Spleen (tissue), 13 donors: ENCODE measurements at regions of chr16 and their contacts with region 1.

Region 1: GRCh38 chr16:67672739-67673662 is 6.4 kb downstream of the C16orf86 start:
- DNase-seq: peak; percentile 91
- H3K4me3 ChIP-seq: peak overlapping the region in 1 of 8 donors; percentile 27
- H3K27ac ChIP-seq: peak overlapping the region; percentile 31 to 94 (median 82)
- H3K4me1 ChIP-seq: peaks cover 25 to 95% (median 78%) of the 10 kb centered on the region in 6 donors
- H3K27me3 ChIP-seq: no peaks in the 10 kb centered on the region
- CTCF ChIP-seq: peak; percentile 58 to 90 (median 80)
- POLR2A ChIP-seq: no peak

Region 2: GRCh38 chr16:67561824-67562525 is 111.0 kb before region 1 on chr16:
- intact Hi-C with region 1: no loop called
- DNase-seq: peak; percentile 100
- H3K4me3 ChIP-seq: peak overlapping the region; percentile 42 to 95 (median 86)
- H3K27ac ChIP-seq: peak overlapping the region; percentile 94 to 100 (median 100)
- H3K4me1 ChIP-seq: peaks cover 33 to 75% (median 51%) of the 10 kb centered on the region in 6 donors
- H3K27me3 ChIP-seq: no peaks in the 10 kb centered on the region
- CTCF ChIP-seq: peak in 1 of 11 experiments; percentile 53
- POLR2A ChIP-seq: peak in 2 of 3 donors; percentile 44 to 88

Region 3: GRCh38 chr16:67719048-67719777 is 46.2 kb after region 1 on chr16 and contains the start of gene GFOD2:
- intact Hi-C with region 1: loop called (anchors 5 kb)
- DNase-seq: peak; percentile 99
- H3K4me3 ChIP-seq: peak within 1 kb of the TSS; percentile 85 to 100 (median 98)
- H3K27ac ChIP-seq: peak within 1 kb of the TSS; percentile 83 to 94 (median 92)
- H3K4me1 ChIP-seq: peaks cover 17 to 66% (median 45%) of the 10 kb centered on the region in 6 donors
- H3K27me3 ChIP-seq: no peaks in the 10 kb centered on the region
- CTCF ChIP-seq: peak in 3 of 11 experiments; percentile 20 to 32 (median 23)
- POLR2A ChIP-seq: peak; percentile 11 to 76 (median 66)
- total RNA-seq, gene GFOD2: 34.6 to 45.6 (median 41.1) TPM

Region 4: DNA sequence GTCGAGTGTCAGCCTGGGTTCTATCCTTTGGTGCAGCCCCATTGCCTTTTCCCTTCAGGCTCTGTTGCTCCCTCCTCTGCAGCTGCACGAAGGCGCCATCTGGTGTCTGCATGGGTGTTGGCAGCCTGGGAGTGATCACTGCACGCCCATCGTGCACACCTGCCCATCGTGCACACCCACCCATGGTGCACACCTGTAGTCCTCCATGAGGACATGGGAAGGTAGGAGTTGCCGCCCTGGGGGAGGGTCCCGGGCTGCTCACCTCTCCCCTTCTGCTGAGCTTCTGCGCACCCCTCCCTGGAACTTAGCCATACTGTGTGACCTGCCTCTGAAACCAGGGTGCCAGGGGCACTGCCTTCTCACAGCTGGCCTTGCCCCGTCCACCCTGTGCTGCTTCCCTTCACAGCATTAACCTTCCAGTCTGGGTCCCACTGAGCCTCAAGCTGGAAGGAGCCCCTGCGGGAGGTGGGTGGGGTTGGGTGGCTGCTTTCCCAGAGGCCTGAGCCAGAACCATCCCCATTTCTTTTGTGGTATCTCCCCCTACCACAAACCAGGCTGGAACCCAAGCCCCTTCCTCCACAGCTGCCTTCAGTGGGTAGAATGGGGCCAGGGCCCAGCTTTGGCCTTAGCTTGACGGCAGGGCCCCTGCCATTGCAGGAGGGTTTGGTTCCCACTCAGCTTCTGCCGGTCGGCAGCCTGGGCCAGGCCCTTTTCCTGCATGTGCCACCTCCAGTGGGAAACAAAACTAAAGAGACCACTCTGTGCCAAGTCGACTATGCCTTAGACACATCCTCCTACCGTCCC is 255.8 kb after region 1 on chr16:
- intact Hi-C with region 1: loop called (anchors 10 kb)
- DNase-seq: peak; percentile 92
- H3K4me3 ChIP-seq: no peak overlapping the region
- H3K27ac ChIP-seq: peak overlapping the region in 1 of 8 donors; percentile 27
- H3K4me1 ChIP-seq: peaks cover 8 to 57% (median 26%) of the 10 kb centered on the region in 6 donors
- H3K27me3 ChIP-seq: no peaks in the 10 kb centered on the region
- CTCF ChIP-seq: peak; percentile 70 to 90 (median 84)
- POLR2A ChIP-seq: no peak